ENCODE measurements at regions of chr15 and their contacts with region 1.

Region 1: GRCh38 chr15:95887666-95888390 is 442.7 kb upstream of the NR2F2 start:
- DNase-seq: no peak
- H3K4me3 ChIP-seq: no peak overlapping the region
- H3K27ac ChIP-seq: no peak overlapping the region
- H3K4me1 ChIP-seq: no peaks in the 10 kb centered on the region
- H3K27me3 ChIP-seq: no peaks in the 10 kb centered on the region
- CTCF ChIP-seq: no peak
- EP300 ChIP-seq: no peak
- POLR2A ChIP-seq: no peak

Region 2: DNA sequence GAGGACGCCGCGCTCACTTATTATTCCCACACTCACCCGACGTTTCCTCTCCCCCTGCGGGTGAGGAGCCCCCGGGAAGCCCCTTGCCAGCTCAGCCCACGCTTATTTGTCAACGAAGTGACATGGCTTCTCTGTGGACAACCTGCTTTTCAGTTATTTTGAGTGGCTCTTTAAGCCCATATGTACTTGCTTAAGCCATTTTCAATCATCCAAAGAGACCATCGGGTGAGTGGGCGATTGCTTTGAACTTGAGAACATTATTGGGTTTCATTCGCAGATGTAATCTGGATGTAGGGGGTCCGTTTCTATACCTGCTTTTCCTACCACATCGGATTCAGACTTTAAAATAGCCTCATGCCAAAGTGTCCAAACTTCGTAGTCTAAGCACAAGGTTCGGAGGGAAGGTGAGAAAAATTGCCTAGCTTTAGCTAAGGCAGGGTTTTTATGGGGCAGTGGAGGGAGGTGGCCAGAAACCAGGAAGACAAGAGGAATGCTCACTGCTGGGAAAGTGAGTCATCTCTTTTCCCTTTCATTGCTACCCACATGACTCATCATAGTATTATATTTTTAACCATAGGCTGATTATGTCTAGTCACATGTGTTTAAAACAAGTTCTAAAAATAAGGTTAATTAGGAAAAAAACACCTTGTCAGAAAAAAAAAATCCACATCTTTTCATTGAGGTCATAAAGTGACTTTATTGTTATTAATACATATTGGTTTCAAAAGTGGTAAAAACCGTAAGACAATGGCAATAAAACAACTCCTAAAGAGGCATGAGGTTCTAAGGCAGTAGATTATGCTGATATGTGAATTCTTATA is 330.4 kb before region 1 on chr15:
- in situ Hi-C with region 1: no loop called
- intact Hi-C with region 1: no loop called
- DNase-seq: no peak
- H3K4me3 ChIP-seq: no peak overlapping the region
- H3K27ac ChIP-seq: no peak overlapping the region
- H3K4me1 ChIP-seq: peaks cover 0 to 6% (median 0%) of the 10 kb centered on the region in 4 donors
- H3K27me3 ChIP-seq: no peaks in the 10 kb centered on the region
- CTCF ChIP-seq: no peak
- EP300 ChIP-seq: no peak
- POLR2A ChIP-seq: no peak

Region 3: DNA sequence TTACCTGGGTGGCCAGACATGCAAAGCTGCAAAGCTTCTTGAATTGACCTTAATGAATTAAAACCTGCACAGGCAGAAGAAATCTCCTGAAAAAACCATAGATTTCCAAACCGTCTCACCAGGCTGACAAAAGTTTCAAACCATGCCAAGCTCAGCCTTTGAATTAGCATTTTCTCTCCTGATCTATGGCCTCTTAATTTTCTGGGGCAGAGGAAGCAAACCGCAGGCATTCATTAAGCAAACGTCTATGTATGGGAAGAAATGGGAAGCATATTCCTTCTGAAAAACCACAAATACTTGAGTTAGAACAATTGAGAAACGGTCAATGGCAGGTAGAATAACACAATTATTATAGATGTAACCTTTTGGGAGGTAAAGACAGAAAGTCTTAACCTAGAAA is 57.5 kb before region 1 on chr15:
- in situ Hi-C with region 1: no loop called
- intact Hi-C with region 1: loop called (anchors 2 kb)
- DNase-seq: no peak
- H3K4me3 ChIP-seq: no peak overlapping the region
- H3K27ac ChIP-seq: no peak overlapping the region
- H3K4me1 ChIP-seq: no peaks in the 10 kb centered on the region
- H3K27me3 ChIP-seq: no peaks in the 10 kb centered on the region
- CTCF ChIP-seq: no peak
- EP300 ChIP-seq: no peak
- POLR2A ChIP-seq: no peak

Region 4: DNA sequence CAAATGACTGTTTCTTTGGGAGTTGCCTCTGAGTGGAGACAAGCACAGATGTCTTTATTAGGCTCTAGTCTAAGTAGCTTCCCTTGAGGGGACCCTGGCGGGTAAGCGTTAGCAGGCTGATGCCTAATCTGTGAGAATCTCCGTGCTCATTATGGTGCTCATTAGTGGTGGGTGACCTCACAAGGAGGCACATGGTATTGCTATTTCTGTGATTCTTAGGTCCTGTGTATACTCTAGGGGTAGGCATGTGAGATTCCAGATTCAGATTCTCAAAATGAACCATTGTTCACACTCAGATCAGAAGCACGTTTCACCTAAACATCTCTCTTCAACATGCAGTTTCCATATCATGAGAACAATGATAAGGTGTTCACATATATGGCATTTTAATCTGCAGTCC is 1252.4 kb after region 1 on chr15:
- in situ Hi-C with region 1: no loop called
- intact Hi-C with region 1: loop called (anchors 5 kb)
- DNase-seq: no peak
- H3K4me3 ChIP-seq: no peak overlapping the region
- H3K27ac ChIP-seq: no peak overlapping the region
- H3K4me1 ChIP-seq: no peaks in the 10 kb centered on the region
- H3K27me3 ChIP-seq: no peaks in the 10 kb centered on the region
- CTCF ChIP-seq: no peak
- EP300 ChIP-seq: no peak
- POLR2A ChIP-seq: no peak